WTC11 (cell line): ENCODE measurements at regions of chr14 and their contacts with region 1.

Region 1: DNA sequence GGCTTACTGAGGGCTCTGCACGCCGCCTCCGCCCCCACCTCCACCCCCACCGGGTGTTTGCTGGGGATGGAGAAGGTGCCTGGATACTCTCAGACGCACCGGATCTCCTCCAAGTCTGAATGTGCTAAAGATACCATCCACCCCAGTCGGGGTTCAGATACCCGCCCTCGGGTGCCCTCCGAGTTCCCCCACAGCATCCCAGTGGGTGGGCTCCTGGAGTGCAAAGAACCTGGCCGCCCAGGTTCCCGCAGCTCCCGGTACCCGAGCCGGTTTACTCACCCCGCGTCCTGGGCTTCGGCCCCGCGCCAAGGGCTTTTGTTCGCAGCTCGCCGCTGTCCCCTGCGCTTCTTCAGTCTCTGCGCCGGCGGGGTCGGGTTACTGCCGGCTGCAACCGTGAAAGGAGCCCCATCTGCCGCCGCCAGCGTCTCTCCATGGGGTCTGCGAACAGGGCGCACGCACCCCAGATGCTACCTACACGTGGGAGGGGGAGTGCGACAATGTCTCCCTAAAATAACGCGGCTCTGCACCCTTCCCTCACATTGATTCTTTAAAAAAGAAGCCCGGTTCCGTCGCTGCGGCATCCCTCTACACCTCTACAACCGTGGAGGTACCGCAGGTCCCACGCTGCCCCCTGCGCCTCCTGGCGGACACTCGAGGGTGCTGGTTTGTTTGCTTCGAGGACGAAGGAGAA is at the start of gene CCDC177:
- DNase-seq: peak; percentile 81
- ATAC-seq: peak; percentile 71
- H3K4me3 Mint-ChIP-seq: peak within 1 kb of the TSS; percentile 76
- H3K27ac Mint-ChIP-seq: no peak within 1 kb of the TSS
- H3K4me1 Mint-ChIP-seq: peaks cover 6% of the 10 kb centered on the region; the same call in 1 of the 2 replicates
- H3K27me3 Mint-ChIP-seq: peaks cover 65% of the 10 kb centered on the region
- CTCF ChIP-seq: peak; percentile 80
- total RNA-seq, gene CCDC177: 1.7 to 2.2 TPM (median 2.1 TPM) in 3 replicates

Region 2: GRCh38 chr14:69475194-69475818 is 99.1 kb before region 1 on chr14:
- CTCF ChIA-PET with region 1: interaction called, 20 read pairs
- POLR2A ChIA-PET with region 1: no interaction called
- DNase-seq: no peak
- ATAC-seq: peak; percentile 78
- H3K4me3 Mint-ChIP-seq: no peak overlapping the region
- H3K27ac Mint-ChIP-seq: no peak overlapping the region
- H3K4me1 Mint-ChIP-seq: no peaks in the 10 kb centered on the region
- H3K27me3 Mint-ChIP-seq: peaks cover 3% of the 10 kb centered on the region
- CTCF ChIP-seq: no peak; the same call in 1 of the 2 replicates

Region 3: DNA sequence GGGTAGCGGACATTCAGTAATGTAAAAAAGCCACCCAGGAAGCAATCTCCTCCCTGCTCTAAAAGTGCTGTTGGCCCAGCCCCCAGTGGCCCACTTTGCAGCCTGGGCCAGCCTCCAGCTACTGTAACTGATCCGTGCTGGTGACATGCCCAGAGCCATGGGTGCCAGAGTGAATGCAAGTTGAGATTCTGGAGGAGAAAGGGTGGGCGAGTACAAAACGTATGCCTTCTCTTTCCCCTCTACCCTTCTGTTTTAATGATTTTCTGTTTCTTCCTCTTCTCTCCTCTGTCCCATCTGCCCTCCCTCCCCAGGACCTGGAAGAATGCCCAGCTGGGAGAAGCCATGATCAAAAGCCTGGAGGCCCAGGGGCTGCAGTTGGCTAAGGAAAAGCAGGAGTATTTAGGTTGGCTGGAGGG is 73.0 kb before region 1 on chr14:
- CTCF ChIA-PET with region 1: interaction called, 31 read pairs
- POLR2A ChIA-PET with region 1: no interaction called
- DNase-seq: no peak
- ATAC-seq: no peak
- H3K4me3 Mint-ChIP-seq: no peak overlapping the region
- H3K27ac Mint-ChIP-seq: no peak overlapping the region
- H3K4me1 Mint-ChIP-seq: peaks cover 13% of the 10 kb centered on the region
- H3K27me3 Mint-ChIP-seq: peaks cover 18% of the 10 kb centered on the region
- CTCF ChIP-seq: no peak

Region 4: DNA sequence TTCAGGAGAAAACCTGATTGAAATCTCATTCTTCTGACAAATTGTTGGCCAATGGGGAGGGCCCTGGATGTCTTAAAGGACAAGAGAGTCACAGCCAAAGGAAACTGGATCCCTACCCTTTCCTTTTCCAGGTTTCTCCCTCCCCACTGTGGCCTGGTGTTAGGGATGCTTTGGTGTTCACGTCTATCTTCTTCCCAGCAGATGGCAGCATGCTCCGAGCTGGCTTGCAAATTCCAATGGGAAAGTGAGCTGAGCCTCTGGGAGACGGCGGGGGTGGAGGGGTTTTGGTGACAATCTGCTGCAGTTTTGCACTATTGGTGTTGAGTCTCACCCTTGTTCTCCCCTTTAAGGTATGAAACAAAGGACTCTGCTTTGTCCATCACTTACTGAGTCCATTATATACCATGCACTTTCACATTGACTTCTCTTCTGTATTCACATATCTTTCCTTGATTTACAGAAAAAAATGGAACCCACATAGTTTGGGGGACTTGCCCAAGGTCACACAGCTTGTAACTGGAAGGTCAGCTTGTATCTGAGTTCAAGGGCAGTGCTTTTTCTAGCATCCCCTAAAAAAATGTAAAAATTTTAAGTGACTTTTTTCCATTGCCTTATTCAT is 39.1 kb before region 1 on chr14:
- CTCF ChIA-PET with region 1: interaction called, 79 read pairs
- POLR2A ChIA-PET with region 1: interaction called, 5 read pairs
- DNase-seq: peak; percentile 75
- ATAC-seq: peak; percentile 98
- H3K4me3 Mint-ChIP-seq: no peak overlapping the region
- H3K27ac Mint-ChIP-seq: no peak overlapping the region
- H3K4me1 Mint-ChIP-seq: 0 out of 2 replicates have a peak, but pooled peaks cover 7% of the 10 kb centered on the region
- H3K27me3 Mint-ChIP-seq: 0 out of 2 replicates have a peak, but pooled peaks cover 3% of the 10 kb centered on the region
- CTCF ChIP-seq: peak; percentile 29

Region 5: DNA sequence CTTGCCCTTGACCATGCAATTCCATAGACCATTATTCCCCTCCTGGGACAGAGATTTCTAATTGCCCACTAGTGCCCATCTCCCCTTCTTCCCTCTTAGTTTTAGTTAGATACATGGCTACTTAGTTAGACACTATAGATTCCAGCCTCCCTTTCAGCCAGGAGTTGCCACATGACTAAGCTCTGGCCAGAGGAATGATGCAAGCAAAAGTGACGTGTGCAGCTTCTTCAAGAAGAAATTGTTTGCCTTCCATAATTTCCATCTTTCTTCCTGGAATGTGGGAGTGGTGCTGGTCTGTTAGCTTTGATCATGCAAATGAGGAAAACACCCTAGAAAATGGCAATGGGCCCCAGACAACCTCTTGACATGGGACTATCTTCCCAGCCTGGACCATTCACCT is 21.2 kb before region 1 on chr14:
- CTCF ChIA-PET with region 1: interaction called, 130 read pairs
- POLR2A ChIA-PET with region 1: interaction called, 4 read pairs
- DNase-seq: no peak
- ATAC-seq: no peak
- H3K4me3 Mint-ChIP-seq: no peak overlapping the region
- H3K27ac Mint-ChIP-seq: no peak overlapping the region
- H3K4me1 Mint-ChIP-seq: peaks cover 20% of the 10 kb centered on the region
- H3K27me3 Mint-ChIP-seq: no peaks in the 10 kb centered on the region
- CTCF ChIP-seq: no peak

Region 6: DNA sequence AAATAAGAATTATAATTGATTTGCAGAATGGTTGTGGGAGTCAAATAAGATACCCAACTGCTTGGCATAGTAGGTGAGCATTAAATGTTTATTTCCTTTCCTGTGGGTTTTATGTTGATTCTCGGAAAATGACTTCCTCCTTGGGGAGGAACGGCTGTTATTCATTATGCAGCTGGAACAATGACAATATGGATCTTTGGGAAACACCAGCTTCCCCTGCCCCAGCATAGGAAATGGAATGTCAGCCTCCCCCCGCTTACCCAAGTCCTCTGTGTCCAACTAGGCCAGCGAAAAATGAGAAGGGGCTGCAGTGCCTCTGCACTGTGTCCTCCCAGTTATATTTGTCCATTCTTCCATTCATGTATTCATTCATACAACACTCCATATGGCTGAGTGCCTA is 12.0 kb after region 1 on chr14:
- CTCF ChIA-PET with region 1: interaction called, 23 read pairs
- POLR2A ChIA-PET with region 1: no interaction called
- DNase-seq: no peak
- ATAC-seq: no peak
- H3K4me3 Mint-ChIP-seq: no peak overlapping the region
- H3K27ac Mint-ChIP-seq: no peak overlapping the region
- H3K4me1 Mint-ChIP-seq: peaks cover 4% of the 10 kb centered on the region
- H3K27me3 Mint-ChIP-seq: no peaks in the 10 kb centered on the region
- CTCF ChIP-seq: no peak

Region 7: GRCh38 chr14:69600304-69600891 is 26.0 kb after region 1 on chr14:
- CTCF ChIA-PET with region 1: interaction called, 10 read pairs
- POLR2A ChIA-PET with region 1: no interaction called
- DNase-seq: no peak
- ATAC-seq: no peak
- H3K4me3 Mint-ChIP-seq: no peak overlapping the region
- H3K27ac Mint-ChIP-seq: peak overlapping the region; percentile 48; the same call in 1 of the 2 replicates
- H3K4me1 Mint-ChIP-seq: peaks cover 6% of the 10 kb centered on the region
- H3K27me3 Mint-ChIP-seq: no peaks in the 10 kb centered on the region
- CTCF ChIP-seq: no peak